ENCODE measurements at regions of chr14 and their contacts with region 1.

Region 1: GRCh38 chr14:77376771-77377501 is at the starts of genes SAMD15 and TMED8:
- DNase-seq: peak; percentile 85
- ATAC-seq: peak; percentile 89
- H3K4me3 Mint-ChIP-seq: peak within 1 kb of the TSS; percentile 93
- H3K27ac Mint-ChIP-seq: peak within 1 kb of the TSS; percentile 93
- H3K4me1 Mint-ChIP-seq: peaks cover 39% of the 10 kb centered on the region
- H3K27me3 Mint-ChIP-seq: no peaks in the 10 kb centered on the region
- CTCF ChIP-seq: no peak
- total RNA-seq, gene SAMD15: 0.71 and 1.00 TPM in 2 replicates
- total RNA-seq, gene TMED8: 29.9 and 31.3 TPM in 2 replicates

Region 2: DNA sequence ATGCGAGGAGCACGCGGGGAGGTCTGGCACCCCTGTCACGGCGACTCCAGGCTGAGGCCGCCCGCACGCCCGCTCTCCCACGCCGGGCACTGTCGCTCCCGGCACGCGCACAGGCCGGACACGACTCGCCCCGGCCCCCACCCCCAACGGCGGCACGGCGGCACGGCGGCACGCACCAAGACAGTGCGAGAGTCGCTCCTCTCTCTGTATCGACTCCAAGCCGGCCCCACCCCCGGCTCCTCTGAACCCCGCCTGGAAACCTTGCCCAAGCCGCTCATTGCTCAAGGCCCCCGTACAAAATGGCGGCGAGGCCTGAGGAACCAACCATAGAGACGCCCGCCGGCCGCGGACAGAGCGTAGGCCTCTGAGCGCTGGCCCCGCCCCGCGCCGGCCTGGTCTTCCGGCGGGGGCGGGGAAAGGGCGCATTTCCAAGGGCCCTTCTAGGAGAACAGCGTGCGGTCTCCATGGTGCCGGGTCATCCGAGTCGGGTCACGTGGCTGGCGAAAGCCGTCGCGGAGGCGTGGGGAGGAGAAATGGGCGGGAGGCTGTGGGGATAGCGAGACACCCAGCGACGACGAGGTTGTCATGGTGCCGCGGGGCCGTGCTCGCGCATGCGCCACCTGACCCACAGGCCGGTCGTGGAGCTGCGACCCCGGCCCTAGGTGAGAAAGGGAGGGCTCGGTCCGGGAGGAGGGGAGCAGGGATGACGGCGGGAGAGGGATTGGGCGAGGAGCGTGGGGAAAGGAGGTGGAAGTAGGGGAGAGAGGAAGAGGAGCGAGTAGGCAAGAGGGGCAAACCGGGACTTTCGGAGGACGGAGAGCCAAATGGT is 279.0 kb before region 1 on chr14 and contains the start of gene CIPC:
- CTCF ChIA-PET with region 1: no interaction called
- POLR2A ChIA-PET with region 1: no interaction called
- intact Hi-C with region 1: loop called (anchors 5 kb)
- DNase-seq: peak; percentile 96
- ATAC-seq: peak; percentile 86
- H3K4me3 Mint-ChIP-seq: peak within 1 kb of the TSS; percentile 99
- H3K27ac Mint-ChIP-seq: peak within 1 kb of the TSS; percentile 98
- H3K4me1 Mint-ChIP-seq: peaks cover 72% of the 10 kb centered on the region
- H3K27me3 Mint-ChIP-seq: no peaks in the 10 kb centered on the region
- CTCF ChIP-seq: no peak
- total RNA-seq, gene CIPC: 26.6 and 28.5 TPM in 2 replicates

Region 3: DNA sequence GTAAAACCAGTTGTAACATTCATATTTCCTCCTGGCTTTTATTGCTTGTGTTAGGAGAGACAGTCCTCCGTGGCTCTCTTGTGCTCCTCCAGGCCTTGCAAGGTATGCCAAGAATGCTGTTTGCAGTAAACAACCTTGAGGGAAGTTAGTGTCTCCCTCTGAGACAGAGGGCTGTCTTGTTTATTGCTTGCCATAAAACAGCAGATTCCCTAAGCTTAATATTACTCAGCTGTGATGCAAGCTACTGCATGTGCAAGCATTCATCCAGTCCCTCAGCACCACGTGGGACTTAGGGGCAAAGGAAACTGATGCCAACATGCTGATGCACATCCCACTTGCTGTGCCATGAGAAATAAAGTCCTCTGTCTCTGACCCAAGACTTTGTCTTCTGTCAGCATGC is 62.9 kb before region 1 on chr14:
- CTCF ChIA-PET with region 1: interaction called, 10 read pairs
- POLR2A ChIA-PET with region 1: interaction called, 96 read pairs
- intact Hi-C with region 1: no loop called
- DNase-seq: no peak
- ATAC-seq: no peak
- H3K4me3 Mint-ChIP-seq: no peak overlapping the region
- H3K27ac Mint-ChIP-seq: no peak overlapping the region
- H3K4me1 Mint-ChIP-seq: peaks cover 4% of the 10 kb centered on the region
- H3K27me3 Mint-ChIP-seq: no peaks in the 10 kb centered on the region
- CTCF ChIP-seq: no peak

Region 4: GRCh38 chr14:77355811-77356210 is 21.1 kb before region 1 on chr14:
- CTCF ChIA-PET with region 1: no interaction called
- POLR2A ChIA-PET with region 1: interaction called, 6 read pairs
- intact Hi-C with region 1: loop called (anchors 1 kb)
- DNase-seq: no peak
- ATAC-seq: no peak
- H3K4me3 Mint-ChIP-seq: no peak overlapping the region
- H3K27ac Mint-ChIP-seq: no peak overlapping the region
- H3K4me1 Mint-ChIP-seq: peaks cover 26% of the 10 kb centered on the region
- H3K27me3 Mint-ChIP-seq: no peaks in the 10 kb centered on the region
- CTCF ChIP-seq: no peak

Region 5: GRCh38 chr14:77760381-77761246 is 383.7 kb after region 1 on chr14 and contains the start of gene SNW1:
- CTCF ChIA-PET with region 1: no interaction called
- POLR2A ChIA-PET with region 1: interaction called, 5 read pairs
- intact Hi-C with region 1: loop called (anchors 5 kb)
- DNase-seq: peak; percentile 77
- ATAC-seq: peak; percentile 91
- H3K4me3 Mint-ChIP-seq: peak within 1 kb of the TSS; percentile 97
- H3K27ac Mint-ChIP-seq: peak within 1 kb of the TSS; percentile 97
- H3K4me1 Mint-ChIP-seq: peaks cover 37% of the 10 kb centered on the region
- H3K27me3 Mint-ChIP-seq: no peaks in the 10 kb centered on the region
- CTCF ChIP-seq: no peak
- total RNA-seq, gene SNW1: 88.2 and 89.3 TPM in 2 replicates

Measured in activated B cell treated with CpG ODN at 0.5 μM for 24 hours (primary cell).